Lower leg skin (tissue), 4 donors: ENCODE measurements at regions of chr6 and their contacts with region 1.

Region 1: GRCh38 chr6:1082285-1082935 is 229.5 kb upstream of the FOXQ1 start:
- DNase-seq: peak in 1 of 2 donors; percentile 57
- H3K4me3 ChIP-seq: no peak overlapping the region
- CTCF ChIP-seq: no peak
- POLR2A ChIP-seq: no peak

Region 2: GRCh38 chr6:1311400-1312202 is 229.2 kb after region 1 on chr6 and contains the start of gene FOXQ1:
- intact Hi-C with region 1: loop called (anchors 10 kb)
- DNase-seq: peak; percentile 71 to 94
- H3K4me3 ChIP-seq: peak within 1 kb of the TSS; percentile 39
- CTCF ChIP-seq: no peak
- POLR2A ChIP-seq: no peak
- total RNA-seq, gene FOXQ1: 54.1 to 117 (median 89.5) TPM